ENCODE measurements at regions of chr5 and their contacts with region 1.

Region 1: GRCh38 chr5:160390787-160391696 is 8.8 kb downstream of the FAM200C start:
- DNase-seq: peak in 3 of 14 experiments; percentile 18 to 43 (median 23)
- ATAC-seq: no peak
- H3K4me3 ChIP-seq: no peak overlapping the region
- H3K4me3 Mint-ChIP-seq: no peak overlapping the region
- H3K27ac ChIP-seq: no peak overlapping the region
- H3K27ac Mint-ChIP-seq: no peak overlapping the region
- H3K4me1 ChIP-seq: no peaks in the 10 kb centered on the region
- H3K4me1 Mint-ChIP-seq: no peaks in the 10 kb centered on the region
- H3K27me3 ChIP-seq: no peaks in the 10 kb centered on the region
- H3K27me3 Mint-ChIP-seq: no peaks in the 10 kb centered on the region
- CTCF ChIP-seq: peak; percentile 64

Region 2: DNA sequence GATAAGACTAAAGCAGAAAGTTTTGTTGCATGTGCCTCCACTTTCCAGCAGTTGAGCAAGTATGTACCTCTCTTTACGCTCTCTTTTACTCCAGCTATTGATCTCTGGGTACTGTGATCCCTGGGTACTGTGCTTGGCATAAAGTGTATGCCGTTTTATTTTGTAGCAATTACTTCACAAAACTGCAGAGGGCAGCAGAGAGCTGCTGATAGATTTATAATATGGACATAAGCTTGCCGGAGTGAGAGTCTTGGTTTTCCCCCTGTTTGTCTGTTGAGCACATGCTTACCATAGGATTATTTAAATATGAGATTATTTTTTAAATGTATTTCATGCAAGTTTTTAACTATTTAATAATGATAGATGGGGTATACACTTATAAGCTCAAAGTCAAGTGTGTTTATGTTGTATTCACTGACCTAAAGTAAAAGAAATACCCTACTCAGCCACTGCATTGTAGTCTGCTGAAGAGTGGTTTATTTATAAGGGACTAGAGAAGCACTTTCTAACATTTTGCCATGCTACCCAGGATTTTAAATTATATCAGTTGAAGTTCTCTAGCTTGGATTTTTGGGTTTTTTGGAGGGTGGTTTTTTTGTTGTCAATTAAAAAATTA is 369.1 kb before region 1 on chr5:
- CTCF ChIA-PET with region 1: interaction called, 3 read pairs
- POLR2A ChIA-PET with region 1: no interaction called
- intact Hi-C with region 1: loop called (anchors 1 to 5 kb)
- DNase-seq: peak in 13 of 14 experiments; percentile 4 to 83 (median 37)
- ATAC-seq: peak; percentile 94
- H3K4me3 ChIP-seq: no peak overlapping the region
- H3K4me3 Mint-ChIP-seq: no peak overlapping the region
- H3K27ac ChIP-seq: no peak overlapping the region
- H3K27ac Mint-ChIP-seq: peak overlapping the region; percentile 35
- H3K4me1 ChIP-seq: peaks cover 10% of the 10 kb centered on the region
- H3K4me1 Mint-ChIP-seq: peaks cover 42% of the 10 kb centered on the region
- H3K27me3 ChIP-seq: no peaks in the 10 kb centered on the region
- H3K27me3 Mint-ChIP-seq: no peaks in the 10 kb centered on the region
- CTCF ChIP-seq: peak; percentile 88

Region 3: GRCh38 chr5:160092960-160093707 is 297.9 kb before region 1 on chr5:
- CTCF ChIA-PET with region 1: no interaction called
- POLR2A ChIA-PET with region 1: no interaction called
- intact Hi-C with region 1: no loop called
- DNase-seq: no peak
- ATAC-seq: no peak
- H3K4me3 ChIP-seq: no peak overlapping the region
- H3K4me3 Mint-ChIP-seq: no peak overlapping the region
- H3K27ac ChIP-seq: no peak overlapping the region
- H3K27ac Mint-ChIP-seq: no peak overlapping the region
- H3K4me1 ChIP-seq: no peaks in the 10 kb centered on the region
- H3K4me1 Mint-ChIP-seq: peaks cover 7% of the 10 kb centered on the region
- H3K27me3 ChIP-seq: no peaks in the 10 kb centered on the region
- H3K27me3 Mint-ChIP-seq: no peaks in the 10 kb centered on the region
- CTCF ChIP-seq: no peak

Region 4: GRCh38 chr5:160199410-160199911 is 191.6 kb before region 1 on chr5:
- CTCF ChIA-PET with region 1: interaction called, 3 read pairs
- POLR2A ChIA-PET with region 1: no interaction called
- intact Hi-C with region 1: loop called in 1 of 2 experiments (anchors 2 kb)
- DNase-seq: peak; percentile 45 to 82 (median 63)
- ATAC-seq: peak; percentile 97
- H3K4me3 ChIP-seq: peak overlapping the region; percentile 51
- H3K4me3 Mint-ChIP-seq: peak overlapping the region; percentile 78
- H3K27ac ChIP-seq: no peak overlapping the region
- H3K27ac Mint-ChIP-seq: no peak overlapping the region
- H3K4me1 ChIP-seq: peaks cover 11% of the 10 kb centered on the region
- H3K4me1 Mint-ChIP-seq: no peaks in the 10 kb centered on the region
- H3K27me3 ChIP-seq: peaks cover 0 to 5% of the 10 kb centered on the region in 2 experiments
- H3K27me3 Mint-ChIP-seq: peaks cover 21% of the 10 kb centered on the region
- CTCF ChIP-seq: peak; percentile 82

Measured in CD4-positive, alpha-beta T cell (primary cell).